Panc1 (cell line): ENCODE measurements at regions of chr5 and their contacts with region 1.

Region 1: GRCh38 chr5:10333154-10334006 is 20.1 kb upstream of the MARCHF6 start:
- DNase-seq: no peak
- ATAC-seq: peak; percentile 90
- H3K4me3 ChIP-seq: peak overlapping the region; percentile 70 to 87
- H3K27ac ChIP-seq: peak overlapping the region; percentile 80
- H3K4me1 ChIP-seq: peaks cover 29% of the 10 kb centered on the region
- H3K27me3 ChIP-seq: no peaks in the 10 kb centered on the region
- CTCF ChIP-seq: no peak

Region 2: GRCh38 chr5:10243660-10244240 is 89.6 kb before region 1 on chr5:
- CTCF ChIA-PET with region 1: no interaction called
- POLR2A ChIA-PET with region 1: no interaction called
- in situ Hi-C with region 1: no loop called
- intact Hi-C with region 1: no loop called
- DNase-seq: no peak
- ATAC-seq: no peak
- H3K4me3 ChIP-seq: no peak overlapping the region
- H3K27ac ChIP-seq: no peak overlapping the region
- H3K4me1 ChIP-seq: peaks cover 6% of the 10 kb centered on the region
- H3K27me3 ChIP-seq: no peaks in the 10 kb centered on the region
- CTCF ChIP-seq: no peak

Region 3: GRCh38 chr5:10283927-10284635 is 49.3 kb before region 1 on chr5:
- CTCF ChIA-PET with region 1: no interaction called
- POLR2A ChIA-PET with region 1: interaction called, 3 read pairs
- in situ Hi-C with region 1: no loop called
- intact Hi-C with region 1: loop called (anchors 1 kb)
- DNase-seq: no peak
- ATAC-seq: peak; percentile 99
- H3K4me3 ChIP-seq: no peak overlapping the region
- H3K27ac ChIP-seq: no peak overlapping the region
- H3K4me1 ChIP-seq: peaks cover 10% of the 10 kb centered on the region; the same call in 1 of the 2 replicates
- H3K27me3 ChIP-seq: no peaks in the 10 kb centered on the region
- CTCF ChIP-seq: peak; percentile 98